Naive thymus-derived CD4-positive, alpha-beta T cell (primary cell): ENCODE measurements at regions of chr13 and their contacts with region 1.

Region 1: GRCh38 chr13:32737111-32737571 is 150.9 kb downstream of the PDS5B start:
- DNase-seq: peak in 7 of 9 donors; percentile 38 to 66 (median 59)
- ATAC-seq: peak; percentile 88
- H3K4me3 ChIP-seq: peak overlapping the region; percentile 28
- H3K4me3 Mint-ChIP-seq: peak overlapping the region; percentile 58 to 93 (median 86)
- H3K27ac ChIP-seq: peak overlapping the region; percentile 77
- H3K27ac Mint-ChIP-seq: peak overlapping the region; percentile 87 to 98 (median 94)
- H3K4me1 ChIP-seq: peaks cover 8 to 22% of the 10 kb centered on the region in 2 donors
- H3K4me1 Mint-ChIP-seq: peaks cover 17 to 64% (median 51%) of the 10 kb centered on the region in 7 donors
- H3K27me3 ChIP-seq: no peaks in the 10 kb centered on the region
- H3K27me3 Mint-ChIP-seq: no peaks in the 10 kb centered on the region

Region 2: GRCh38 chr13:32427852-32428580 is 309.1 kb before region 1 on chr13 and contains the start of gene N4BP2L1:
- CTCF ChIA-PET with region 1: no interaction called
- POLR2A ChIA-PET with region 1: interaction called, 4 read pairs
- intact Hi-C with region 1: loop called (anchors 2 to 10 kb)
- DNase-seq: peak; percentile 60 to 91 (median 78)
- ATAC-seq: peak; percentile 81
- H3K4me3 ChIP-seq: peak within 1 kb of the TSS; percentile 64
- H3K4me3 Mint-ChIP-seq: peak within 1 kb of the TSS; percentile 90 to 100 (median 94)
- H3K27ac ChIP-seq: peak within 1 kb of the TSS; percentile 98
- H3K27ac Mint-ChIP-seq: peak within 1 kb of the TSS; percentile 95 to 99 (median 97)
- H3K4me1 ChIP-seq: peaks cover 19 to 20% of the 10 kb centered on the region in 2 donors
- H3K4me1 Mint-ChIP-seq: peaks cover 34 to 50% (median 48%) of the 10 kb centered on the region in 7 donors
- H3K27me3 ChIP-seq: no peaks in the 10 kb centered on the region
- H3K27me3 Mint-ChIP-seq: no peaks in the 10 kb centered on the region
- total RNA-seq, gene N4BP2L1: 30.4 to 58.0 (median 47.1) TPM

Region 3: GRCh38 chr13:32791545-32792172 is 54.5 kb after region 1 on chr13:
- CTCF ChIA-PET with region 1: no interaction called
- POLR2A ChIA-PET with region 1: no interaction called
- intact Hi-C with region 1: loop called (anchors 1 to 5 kb)
- DNase-seq: peak in 7 of 9 donors; percentile 35 to 61 (median 47)
- ATAC-seq: peak; percentile 82
- H3K4me3 ChIP-seq: no peak overlapping the region
- H3K4me3 Mint-ChIP-seq: peak overlapping the region; percentile 14 to 75 (median 59)
- H3K27ac ChIP-seq: peak overlapping the region; percentile 55
- H3K27ac Mint-ChIP-seq: peak overlapping the region; percentile 77 to 96 (median 90)
- H3K4me1 ChIP-seq: peaks cover 0 to 28% of the 10 kb centered on the region in 2 donors
- H3K4me1 Mint-ChIP-seq: peaks cover 25 to 64% (median 50%) of the 10 kb centered on the region in 7 donors
- H3K27me3 ChIP-seq: no peaks in the 10 kb centered on the region
- H3K27me3 Mint-ChIP-seq: no peaks in the 10 kb centered on the region

Region 4: GRCh38 chr13:32838945-32839344 is 101.8 kb after region 1 on chr13:
- CTCF ChIA-PET with region 1: no interaction called
- POLR2A ChIA-PET with region 1: no interaction called
- intact Hi-C with region 1: loop called in 1 of 2 experiments (anchors 2 kb)
- DNase-seq: peak in 4 of 9 donors; percentile 8 to 20 (median 16)
- ATAC-seq: no peak
- H3K4me3 ChIP-seq: no peak overlapping the region
- H3K4me3 Mint-ChIP-seq: peak overlapping the region in 5 of 10 donors; percentile 20 to 63 (median 25)
- H3K27ac ChIP-seq: no peak overlapping the region
- H3K27ac Mint-ChIP-seq: peak overlapping the region in 5 of 9 donors; percentile 26 to 91 (median 63)
- H3K4me1 ChIP-seq: peaks cover 0 to 12% of the 10 kb centered on the region in 2 donors
- H3K4me1 Mint-ChIP-seq: peaks cover 4 to 28% (median 16%) of the 10 kb centered on the region in 7 donors
- H3K27me3 ChIP-seq: no peaks in the 10 kb centered on the region
- H3K27me3 Mint-ChIP-seq: peaks cover 0 to under 1% (median 0%) of the 10 kb centered on the region in 5 donors

Region 5: GRCh38 chr13:32905063-32905863 is 168.1 kb after region 1 on chr13:
- CTCF ChIA-PET with region 1: no interaction called
- POLR2A ChIA-PET with region 1: no interaction called
- intact Hi-C with region 1: loop called in 1 of 2 experiments (anchors 5 kb)
- DNase-seq: peak in 1 of 9 donors; percentile 32
- ATAC-seq: no peak
- H3K4me3 ChIP-seq: no peak overlapping the region
- H3K4me3 Mint-ChIP-seq: peak overlapping the region in 1 of 10 donors; percentile 79
- H3K27ac ChIP-seq: no peak overlapping the region
- H3K27ac Mint-ChIP-seq: peak overlapping the region in 2 of 9 donors; percentile 6 to 89
- H3K4me1 ChIP-seq: no peaks in the 10 kb centered on the region
- H3K4me1 Mint-ChIP-seq: peaks cover 0 to 53% (median 14%) of the 10 kb centered on the region in 7 donors
- H3K27me3 ChIP-seq: no peaks in the 10 kb centered on the region
- H3K27me3 Mint-ChIP-seq: peaks cover 0 to 4% (median 0%) of the 10 kb centered on the region in 5 donors

Region 6: DNA sequence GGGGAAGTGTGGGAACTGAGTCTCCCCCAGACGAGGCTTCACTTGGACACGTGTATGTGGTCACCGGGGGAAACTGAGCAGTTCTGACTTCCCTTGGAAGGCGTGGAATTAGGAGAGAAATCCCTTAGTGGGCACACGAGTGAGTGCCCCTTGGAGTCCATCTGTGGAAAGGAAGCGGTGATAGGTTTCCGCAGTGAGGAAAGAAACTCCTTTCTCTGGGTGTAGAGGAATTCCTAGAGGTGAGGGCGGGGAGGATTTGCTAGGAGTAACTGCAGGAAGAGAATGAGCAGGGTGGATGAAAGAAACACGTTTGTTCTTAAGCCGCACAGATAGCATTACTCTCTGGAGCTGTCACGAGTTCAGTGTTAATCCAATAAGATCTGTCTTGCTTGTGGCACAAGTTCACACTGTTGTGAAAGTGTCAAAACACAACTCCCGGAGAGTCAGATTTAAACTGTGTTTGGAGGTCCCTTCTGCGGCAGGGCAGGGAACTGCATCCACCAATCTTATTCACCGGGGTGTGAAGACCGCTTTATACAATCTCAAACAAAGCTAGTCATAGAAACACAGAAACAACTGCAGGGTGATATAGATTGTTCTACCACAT is 280.3 kb after region 1 on chr13:
- CTCF ChIA-PET with region 1: no interaction called
- POLR2A ChIA-PET with region 1: no interaction called
- intact Hi-C with region 1: loop called in 1 of 2 experiments (anchors 2 kb)
- DNase-seq: peak in 6 of 9 donors; percentile 6 to 47 (median 18)
- ATAC-seq: peak; percentile 80
- H3K4me3 ChIP-seq: peak overlapping the region; percentile 30
- H3K4me3 Mint-ChIP-seq: peak overlapping the region; percentile 37 to 81 (median 73)
- H3K27ac ChIP-seq: no peak overlapping the region
- H3K27ac Mint-ChIP-seq: peak overlapping the region in 2 of 9 donors; percentile 49 to 66
- H3K4me1 ChIP-seq: peaks cover 3 to 7% of the 10 kb centered on the region in 2 donors
- H3K4me1 Mint-ChIP-seq: peaks cover 10 to 21% (median 15%) of the 10 kb centered on the region in 7 donors
- H3K27me3 ChIP-seq: peaks cover 4 to 7% of the 10 kb centered on the region in 2 donors
- H3K27me3 Mint-ChIP-seq: peaks cover 65 to 83% (median 71%) of the 10 kb centered on the region in 5 donors

Region 7: GRCh38 chr13:33634546-33634982 is 897.4 kb after region 1 on chr13:
- CTCF ChIA-PET with region 1: no interaction called
- POLR2A ChIA-PET with region 1: no interaction called
- intact Hi-C with region 1: no loop called
- DNase-seq: no peak
- ATAC-seq: no peak
- H3K4me3 ChIP-seq: no peak overlapping the region
- H3K4me3 Mint-ChIP-seq: no peak overlapping the region
- H3K27ac ChIP-seq: no peak overlapping the region
- H3K27ac Mint-ChIP-seq: no peak overlapping the region
- H3K4me1 ChIP-seq: no peaks in the 10 kb centered on the region
- H3K4me1 Mint-ChIP-seq: peaks cover 0 to 8% (median 0%) of the 10 kb centered on the region in 7 donors
- H3K27me3 ChIP-seq: no peaks in the 10 kb centered on the region
- H3K27me3 Mint-ChIP-seq: peaks cover 0 to 16% (median 0%) of the 10 kb centered on the region in 5 donors